ENCODE measurements at regions of chr14 and their contacts with region 1.

Region 1: GRCh38 chr14:102516531-102517415 is 7.2 kb upstream of the ANKRD9 start:
- DNase-seq: no peak
- H3K4me3 ChIP-seq: peak overlapping the region; percentile 60 to 75
- H3K27ac ChIP-seq: peak overlapping the region; percentile 31 to 77
- H3K4me1 ChIP-seq: peaks cover 4% of the 10 kb centered on the region
- H3K27me3 ChIP-seq: no peaks in the 10 kb centered on the region
- CTCF ChIP-seq: peak; percentile 94 to 100 (median 97)
- POLR2A ChIP-seq: no peak

Region 2: GRCh38 chr14:102437997-102438915 is 78.5 kb before region 1 on chr14:
- intact Hi-C with region 1: loop called (anchors 1 kb)
- DNase-seq: peak; percentile 85
- H3K4me3 ChIP-seq: peak overlapping the region; percentile 11 to 17
- H3K27ac ChIP-seq: no peak overlapping the region
- H3K4me1 ChIP-seq: no peaks in the 10 kb centered on the region
- H3K27me3 ChIP-seq: no peaks in the 10 kb centered on the region
- CTCF ChIP-seq: peak; percentile 31 to 92 (median 80)
- POLR2A ChIP-seq: no peak